ENCODE measurements at regions of chr12 and their contacts with region 1.

Region 1: DNA sequence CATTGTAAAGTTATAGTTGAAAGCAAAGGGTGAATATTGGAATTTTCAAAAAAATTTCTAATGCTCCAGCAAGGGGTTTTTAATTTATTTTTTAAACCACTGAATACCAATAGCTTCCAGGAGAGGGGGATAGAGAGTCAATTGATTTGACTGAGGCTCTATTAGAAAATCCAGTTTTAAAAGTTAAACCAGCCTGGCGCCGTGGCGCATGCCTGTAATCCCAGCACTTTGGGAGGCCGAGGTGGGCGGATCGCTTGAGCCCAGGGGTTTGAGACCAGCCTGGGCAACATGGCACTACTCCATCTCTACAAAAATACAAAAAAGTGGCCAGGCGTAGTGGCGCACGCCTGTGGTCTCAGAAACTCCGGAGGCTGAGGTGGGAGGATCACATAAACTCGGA is 150.1 kb downstream of the SLC38A4 start:
- DNase-seq: no peak
- H3K4me3 ChIP-seq: peak overlapping the region in 1 of 2 donors; percentile 13
- H3K27ac ChIP-seq: no peak overlapping the region
- H3K4me1 ChIP-seq: peaks cover 0 to 5% (median 2%) of the 10 kb centered on the region in 4 donors
- H3K27me3 ChIP-seq: no peaks in the 10 kb centered on the region
- CTCF ChIP-seq: peak; percentile 67 to 73

Region 2: DNA sequence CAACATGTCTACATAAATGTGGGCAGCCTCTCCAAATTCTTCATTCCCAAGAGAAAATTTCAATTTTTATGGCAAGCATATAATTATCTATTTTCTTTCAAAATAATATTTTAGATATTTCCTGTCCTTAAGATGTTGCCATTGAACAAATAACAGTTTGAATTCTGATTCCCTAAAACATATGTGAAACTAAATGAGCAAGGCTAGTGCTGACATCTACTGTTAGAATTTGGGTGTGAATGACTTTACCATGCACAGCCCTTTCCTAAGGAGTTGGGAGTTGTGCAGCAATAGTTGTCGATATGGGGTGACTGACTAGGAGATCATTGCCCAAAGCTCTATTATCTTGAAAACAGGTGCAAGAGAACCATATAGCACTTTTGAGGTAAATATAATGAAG is 258.2 kb after region 1 on chr12:
- intact Hi-C with region 1: loop called (anchors 5 kb)
- DNase-seq: no peak
- H3K4me3 ChIP-seq: no peak overlapping the region
- H3K27ac ChIP-seq: no peak overlapping the region
- H3K4me1 ChIP-seq: no peaks in the 10 kb centered on the region
- H3K27me3 ChIP-seq: no peaks in the 10 kb centered on the region
- CTCF ChIP-seq: peak; percentile 54 to 64

Measured in tibial artery (tissue), 4 donors.